ENCODE measurements at regions of chr17 and their contacts with region 1.

Region 1: GRCh38 chr17:38415250-38416194 is 12.7 kb upstream of the ARHGAP23 start:
- DNase-seq: peak; percentile 89 to 91
- H3K4me3 ChIP-seq: peak overlapping the region; percentile 44
- H3K4me3 Mint-ChIP-seq: peak overlapping the region; percentile 82
- H3K27ac Mint-ChIP-seq: peak overlapping the region; percentile 98
- H3K4me1 ChIP-seq: peaks cover 23% of the 10 kb centered on the region
- H3K4me1 Mint-ChIP-seq: peaks cover 14% of the 10 kb centered on the region
- H3K27me3 ChIP-seq: no peaks in the 10 kb centered on the region
- H3K27me3 Mint-ChIP-seq: no peaks in the 10 kb centered on the region
- CTCF ChIP-seq: no peak

Region 2: GRCh38 chr17:38341035-38341721 is 74.3 kb before region 1 on chr17:
- CTCF ChIA-PET with region 1: interaction called, 23 read pairs
- POLR2A ChIA-PET with region 1: no interaction called
- intact Hi-C with region 1: no loop called
- DNase-seq: no peak
- H3K4me3 ChIP-seq: no peak overlapping the region
- H3K4me3 Mint-ChIP-seq: no peak overlapping the region
- H3K27ac Mint-ChIP-seq: no peak overlapping the region
- H3K4me1 ChIP-seq: peaks cover 4% of the 10 kb centered on the region; the same call in 1 of the 2 replicates
- H3K4me1 Mint-ChIP-seq: no peaks in the 10 kb centered on the region
- H3K27me3 ChIP-seq: no peaks in the 10 kb centered on the region
- H3K27me3 Mint-ChIP-seq: no peaks in the 10 kb centered on the region
- CTCF ChIP-seq: no peak

Region 3: DNA sequence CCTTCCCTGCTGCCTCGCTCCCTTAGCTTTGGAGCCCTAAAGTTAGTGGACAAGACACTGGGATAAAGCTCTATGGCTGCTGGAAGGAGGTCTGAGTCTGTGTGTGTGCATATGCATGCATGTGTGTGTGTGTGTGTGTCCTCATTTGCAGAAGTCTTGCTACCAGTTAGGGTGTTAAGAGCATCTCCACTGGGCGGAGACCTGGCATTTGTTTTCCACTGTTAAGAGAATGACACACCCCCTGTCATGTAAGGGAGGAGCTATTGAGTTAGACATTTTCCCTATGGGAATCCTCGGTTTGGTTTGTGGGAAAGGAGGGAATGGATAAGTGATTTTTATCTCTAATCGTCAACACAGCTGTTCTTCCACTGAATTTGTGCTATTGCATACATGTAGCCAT is 12.0 kb before region 1 on chr17:
- CTCF ChIA-PET with region 1: interaction called, 11 read pairs
- POLR2A ChIA-PET with region 1: interaction called, 3 read pairs
- intact Hi-C with region 1: no loop called
- DNase-seq: peak in 1 of 2 experiments; percentile 22
- H3K4me3 ChIP-seq: no peak overlapping the region
- H3K4me3 Mint-ChIP-seq: no peak overlapping the region
- H3K27ac Mint-ChIP-seq: no peak overlapping the region
- H3K4me1 ChIP-seq: no peaks in the 10 kb centered on the region
- H3K4me1 Mint-ChIP-seq: no peaks in the 10 kb centered on the region
- H3K27me3 ChIP-seq: no peaks in the 10 kb centered on the region
- H3K27me3 Mint-ChIP-seq: no peaks in the 10 kb centered on the region
- CTCF ChIP-seq: no peak